WTC11 (cell line): ENCODE measurements at regions of chr4 and their contacts with region 1.

Region 1: GRCh38 chr4:10106421-10107039 is 10.1 kb downstream of the WDR1 start:
- DNase-seq: no peak
- ATAC-seq: no peak
- H3K4me3 Mint-ChIP-seq: no peak overlapping the region
- H3K27ac Mint-ChIP-seq: no peak overlapping the region
- H3K4me1 Mint-ChIP-seq: peaks cover 84% of the 10 kb centered on the region
- H3K27me3 Mint-ChIP-seq: no peaks in the 10 kb centered on the region
- CTCF ChIP-seq: no peak

Region 2: GRCh38 chr4:10033191-10033881 is 73.2 kb before region 1 on chr4:
- CTCF ChIA-PET with region 1: no interaction called
- POLR2A ChIA-PET with region 1: no interaction called
- DNase-seq: no peak
- ATAC-seq: no peak
- H3K4me3 Mint-ChIP-seq: no peak overlapping the region
- H3K27ac Mint-ChIP-seq: no peak overlapping the region
- H3K4me1 Mint-ChIP-seq: 0 out of 2 replicates have a peak, but pooled peaks cover 10% of the 10 kb centered on the region
- H3K27me3 Mint-ChIP-seq: no peaks in the 10 kb centered on the region; the same call in 1 of the 2 replicates
- CTCF ChIP-seq: no peak

Region 3: DNA sequence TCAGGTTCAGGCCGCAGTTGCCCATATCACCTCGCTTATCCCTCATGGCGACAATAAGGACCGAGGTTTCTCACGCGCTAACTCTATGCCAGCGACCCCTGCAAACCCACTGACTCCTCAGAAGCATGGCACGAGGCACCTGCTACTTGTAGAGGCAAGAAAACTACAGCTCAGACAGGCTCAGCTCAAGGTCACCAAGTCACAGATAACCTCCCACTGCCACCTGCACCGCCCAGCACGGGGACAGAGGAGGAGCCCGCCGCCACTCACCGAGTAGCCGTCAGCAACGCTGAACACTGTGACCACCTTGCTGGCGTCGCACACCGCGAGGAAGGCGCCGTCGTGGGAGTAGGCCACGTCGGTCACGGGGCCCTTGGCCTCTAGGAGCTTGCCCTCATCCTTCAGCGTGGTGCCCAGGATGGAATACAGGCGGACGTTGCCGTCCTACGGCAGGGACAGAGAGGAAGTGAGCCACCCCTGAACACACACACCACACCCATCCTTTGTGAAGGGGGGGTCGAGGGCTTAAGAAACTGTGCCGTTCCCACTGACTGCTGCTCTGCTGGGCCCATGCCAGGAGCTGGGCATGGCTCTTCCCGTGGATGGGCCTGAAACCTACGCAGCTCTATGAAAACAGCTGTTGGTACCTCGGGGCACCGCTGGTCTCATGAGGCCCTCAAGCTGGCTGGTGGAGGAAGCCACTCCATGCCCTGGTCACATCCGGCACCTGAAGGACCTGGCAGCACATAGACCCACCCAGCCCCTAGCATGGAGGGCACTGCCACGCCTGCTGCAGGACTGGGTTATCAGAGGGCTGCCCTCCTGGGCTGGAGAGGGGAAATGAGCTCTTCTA is 28.8 kb before region 1 on chr4:
- CTCF ChIA-PET with region 1: no interaction called
- POLR2A ChIA-PET with region 1: no interaction called
- DNase-seq: peak; percentile 4
- ATAC-seq: no peak
- H3K4me3 Mint-ChIP-seq: no peak overlapping the region
- H3K27ac Mint-ChIP-seq: no peak overlapping the region
- H3K4me1 Mint-ChIP-seq: no peaks in the 10 kb centered on the region
- H3K27me3 Mint-ChIP-seq: no peaks in the 10 kb centered on the region
- CTCF ChIP-seq: no peak

Region 4: DNA sequence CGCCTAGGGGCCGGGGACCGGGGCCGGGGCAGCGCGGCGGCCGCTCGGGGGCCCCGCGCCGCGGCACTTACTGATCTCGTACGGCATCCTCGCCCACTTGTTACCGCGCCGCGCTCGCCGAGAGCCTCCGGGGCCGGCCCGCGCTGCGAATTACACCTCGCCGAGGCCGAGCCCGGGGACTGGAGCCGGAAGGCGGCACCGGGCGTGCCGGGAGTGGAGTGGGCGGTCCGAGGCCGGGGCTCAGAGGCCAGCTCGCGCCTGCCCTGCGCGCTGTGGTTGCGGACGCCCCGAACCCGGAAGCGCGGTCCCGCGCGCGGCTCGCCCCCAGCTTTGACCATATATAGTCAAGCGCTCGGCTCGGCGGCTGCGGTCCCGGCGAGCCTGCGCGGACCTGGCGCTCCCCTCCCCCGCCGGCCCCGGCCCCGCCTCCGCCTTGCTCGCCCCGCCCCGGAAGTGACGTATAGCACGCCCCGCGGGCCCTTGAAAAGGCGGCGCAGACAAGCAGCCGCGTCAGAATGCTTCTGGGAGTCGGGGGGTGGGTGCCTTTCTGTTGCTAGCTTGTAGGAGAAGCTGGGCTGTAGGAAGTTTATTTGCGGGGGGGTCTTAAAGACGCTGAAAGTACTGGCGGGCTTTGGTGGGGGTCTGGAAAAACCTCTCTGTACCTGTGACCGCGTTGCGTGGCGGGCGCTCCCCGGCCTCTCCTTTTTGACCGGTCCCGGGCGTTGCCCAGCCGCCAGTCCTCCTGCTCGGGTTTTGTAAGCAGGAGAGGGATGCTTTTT is 10.2 kb after region 1 on chr4 and contains the start of gene WDR1:
- CTCF ChIA-PET with region 1: interaction called, 3 read pairs
- POLR2A ChIA-PET with region 1: interaction called, 51 read pairs
- DNase-seq: peak; percentile 95
- ATAC-seq: peak; percentile 84
- H3K4me3 Mint-ChIP-seq: peak within 1 kb of the TSS; percentile 85
- H3K27ac Mint-ChIP-seq: peak within 1 kb of the TSS; percentile 97
- H3K4me1 Mint-ChIP-seq: peaks cover 66% of the 10 kb centered on the region
- H3K27me3 Mint-ChIP-seq: no peaks in the 10 kb centered on the region
- CTCF ChIP-seq: no peak
- total RNA-seq, gene WDR1: 288 to 306 TPM (median 288 TPM) in 3 replicates